GM10248 (cell line): ENCODE measurements at regions of chr1 and their contacts with region 1.

Region 1: GRCh38 chr1:67214420-67215174 is 48.3 kb downstream of the IL23R start:
- DNase-seq: peak; percentile 22
- CTCF ChIP-seq: peak; percentile 49

Region 2: DNA sequence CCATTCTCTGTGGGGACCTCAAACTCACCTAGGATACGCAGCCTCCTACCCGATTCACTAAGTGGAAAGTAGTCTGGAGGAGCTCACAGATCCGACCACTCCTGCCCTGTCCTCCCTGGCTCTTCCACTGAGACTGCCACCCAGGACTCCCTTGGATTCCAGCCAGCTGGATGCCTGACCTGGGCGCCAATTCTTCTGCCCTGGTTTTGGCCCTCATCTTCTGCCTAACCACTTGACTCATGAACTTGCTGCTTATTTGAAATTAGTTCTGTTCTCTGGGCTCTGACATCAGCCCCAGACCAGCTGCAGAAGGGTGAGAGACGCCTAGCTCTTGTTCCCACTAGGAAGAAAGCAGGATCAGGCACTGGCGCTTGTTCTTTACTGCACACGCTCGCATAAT is 209.5 kb before region 1 on chr1:
- CTCF ChIA-PET with region 1: interaction called, 16 read pairs
- POLR2A ChIA-PET with region 1: no interaction called
- DNase-seq: no peak
- CTCF ChIP-seq: no peak

Region 3: GRCh38 chr1:67162957-67163356 is 51.6 kb before region 1 on chr1:
- CTCF ChIA-PET with region 1: interaction called, 79 read pairs
- POLR2A ChIA-PET with region 1: no interaction called
- DNase-seq: peak; percentile 15
- CTCF ChIP-seq: no peak

Region 4: GRCh38 chr1:67227196-67227595 is 12.6 kb after region 1 on chr1:
- CTCF ChIA-PET with region 1: interaction called, 87 read pairs
- POLR2A ChIA-PET with region 1: no interaction called
- DNase-seq: no peak
- CTCF ChIP-seq: no peak

Region 5: GRCh38 chr1:67324050-67324449 is 109.5 kb after region 1 on chr1:
- CTCF ChIA-PET with region 1: interaction called, 12 read pairs
- POLR2A ChIA-PET with region 1: no interaction called
- DNase-seq: no peak
- CTCF ChIP-seq: no peak

Region 6: DNA sequence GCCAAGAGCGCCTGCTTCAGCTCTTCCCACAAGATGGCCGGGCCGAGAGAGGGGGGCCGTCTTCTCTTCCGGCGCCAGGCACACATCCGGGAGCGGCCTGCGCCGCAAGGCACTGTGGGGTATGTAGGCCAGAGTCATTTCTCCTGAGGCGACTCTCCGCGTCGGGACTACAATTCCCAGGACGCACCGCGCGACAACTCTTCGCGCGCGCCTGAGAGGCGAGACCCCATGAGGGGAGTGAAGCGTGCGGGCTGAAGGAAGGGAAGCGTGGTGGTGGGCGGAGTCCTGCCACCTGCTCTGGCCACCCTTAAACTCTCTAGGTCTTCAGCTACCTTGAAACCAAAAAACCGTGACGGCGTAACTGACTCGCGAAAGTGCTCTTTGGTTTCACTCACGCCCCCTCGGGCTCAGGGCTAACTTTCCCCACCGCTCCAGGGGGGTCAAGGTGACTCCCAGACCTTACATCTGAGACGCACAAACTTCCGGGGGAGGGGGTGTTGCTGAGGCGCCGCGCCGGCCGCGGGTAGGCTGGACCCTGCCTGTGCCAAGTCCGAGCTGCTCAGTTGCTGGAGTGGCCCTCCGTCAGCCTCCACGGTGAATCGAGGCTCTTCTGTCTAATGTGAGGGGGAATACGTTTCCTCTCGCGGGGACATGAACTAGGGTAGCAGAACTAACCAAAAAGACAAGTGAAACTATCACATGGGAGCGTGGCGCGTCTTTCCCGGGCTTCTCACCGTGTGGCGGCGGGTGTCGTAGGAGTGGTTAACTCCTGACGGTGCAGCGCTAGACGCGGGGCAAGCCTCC is 216.0 kb after region 1 on chr1 and contains the start of gene SERBP1:
- CTCF ChIA-PET with region 1: interaction called, 29 read pairs
- POLR2A ChIA-PET with region 1: no interaction called
- DNase-seq: peak; percentile 95
- CTCF ChIP-seq: no peak

Region 7: DNA sequence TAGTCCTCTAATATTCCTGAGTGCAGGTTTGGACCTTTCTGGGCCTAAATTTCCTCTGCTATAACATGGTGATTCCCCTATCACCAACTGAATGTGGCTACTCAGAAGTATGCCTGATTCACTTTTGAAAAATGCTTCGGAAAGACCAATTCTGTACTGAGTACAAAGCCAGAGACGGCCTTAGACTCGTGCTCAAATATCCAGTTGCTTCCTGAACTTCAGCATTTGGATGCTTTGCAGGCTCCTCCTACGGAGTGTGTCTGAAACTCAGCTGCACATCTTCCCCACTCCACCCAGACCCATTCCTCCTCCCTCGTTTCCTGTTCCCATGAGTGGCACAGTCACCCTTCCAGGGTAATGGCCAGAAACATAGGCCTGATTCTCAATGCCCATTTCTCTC is 372.0 kb after region 1 on chr1:
- CTCF ChIA-PET with region 1: no interaction called
- POLR2A ChIA-PET with region 1: no interaction called
- DNase-seq: no peak
- CTCF ChIP-seq: no peak